ENCODE measurements at regions of chr2 and their contacts with region 1.

Region 1: DNA sequence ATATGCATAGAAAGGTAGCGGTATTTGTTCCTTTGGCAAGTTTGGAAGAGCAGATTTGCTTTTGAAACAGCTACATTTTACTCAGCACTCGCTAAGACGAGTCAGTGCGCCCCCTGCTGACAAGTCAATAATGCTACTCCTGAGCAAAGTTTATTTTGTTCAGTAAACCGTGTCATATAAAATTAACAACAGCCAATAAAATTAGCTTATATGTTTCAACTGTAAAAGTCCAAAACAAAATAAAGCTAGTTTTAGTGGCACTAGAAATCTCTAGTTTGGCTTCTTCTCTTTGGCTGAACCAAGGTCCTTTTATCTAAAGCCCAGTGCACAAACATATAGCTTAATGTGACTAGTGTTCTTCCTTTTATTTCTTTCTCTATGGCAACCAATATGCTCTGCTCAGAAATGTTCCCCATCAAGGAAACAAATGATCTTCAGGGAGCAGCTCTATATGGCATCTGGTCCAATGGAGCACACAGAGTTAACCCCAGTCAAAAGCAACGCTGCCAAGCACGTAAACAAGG is 4.2 kb upstream of the POU3F3 start:
- DNase-seq: peak; percentile 45
- CTCF ChIP-seq: peak; percentile 79

Region 2: DNA sequence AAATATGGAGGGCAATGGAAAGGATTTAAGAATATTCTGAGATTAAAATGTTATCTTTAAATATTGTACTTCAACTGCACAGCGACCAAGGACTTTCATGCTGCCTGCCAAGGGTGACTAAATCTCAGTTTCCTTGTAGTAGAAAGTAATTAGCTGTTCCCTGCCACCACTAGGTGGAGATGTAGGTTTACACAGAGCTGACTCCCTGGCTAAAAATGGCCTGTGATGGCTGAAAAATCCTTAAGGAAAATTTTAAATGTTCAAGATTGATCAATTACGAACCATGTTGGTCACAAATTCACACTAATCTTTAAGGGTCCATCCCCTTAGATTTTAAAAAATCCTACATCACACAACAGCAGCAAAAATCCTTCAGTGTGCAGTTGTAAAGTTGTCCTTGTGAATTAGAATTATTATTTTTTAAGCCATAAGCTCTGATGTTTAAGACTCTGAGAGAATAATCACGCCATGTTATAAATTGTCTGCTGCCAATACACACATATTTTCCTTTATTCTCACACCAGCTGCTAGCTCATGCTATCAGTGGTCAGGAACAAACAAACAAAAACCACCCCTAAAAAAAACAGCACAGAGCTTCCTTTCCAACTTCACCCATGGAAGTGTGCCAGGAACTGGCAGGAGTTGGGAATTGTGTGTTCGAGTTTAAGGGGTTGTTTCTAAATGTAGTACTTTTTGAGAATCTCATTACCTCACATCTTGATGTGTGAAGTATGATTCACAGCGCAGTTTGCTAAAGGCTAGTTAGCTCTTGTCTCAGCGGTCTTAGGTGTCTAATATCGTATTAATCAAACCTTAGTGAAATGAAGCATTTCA is 1688.0 kb before region 1 on chr2:
- CTCF ChIA-PET with region 1: interaction called, 31 read pairs
- POLR2A ChIA-PET with region 1: no interaction called
- DNase-seq: peak; percentile 40
- CTCF ChIP-seq: peak; percentile 76

Region 3: GRCh38 chr2:103959174-103960128 is 890.2 kb before region 1 on chr2:
- CTCF ChIA-PET with region 1: interaction called, 21 read pairs
- POLR2A ChIA-PET with region 1: no interaction called
- DNase-seq: peak; percentile 5
- CTCF ChIP-seq: peak; percentile 56

Region 4: GRCh38 chr2:104834431-104835153 is 15.1 kb before region 1 on chr2:
- CTCF ChIA-PET with region 1: interaction called, 26 read pairs
- POLR2A ChIA-PET with region 1: no interaction called
- DNase-seq: no peak
- CTCF ChIP-seq: no peak

Region 5: DNA sequence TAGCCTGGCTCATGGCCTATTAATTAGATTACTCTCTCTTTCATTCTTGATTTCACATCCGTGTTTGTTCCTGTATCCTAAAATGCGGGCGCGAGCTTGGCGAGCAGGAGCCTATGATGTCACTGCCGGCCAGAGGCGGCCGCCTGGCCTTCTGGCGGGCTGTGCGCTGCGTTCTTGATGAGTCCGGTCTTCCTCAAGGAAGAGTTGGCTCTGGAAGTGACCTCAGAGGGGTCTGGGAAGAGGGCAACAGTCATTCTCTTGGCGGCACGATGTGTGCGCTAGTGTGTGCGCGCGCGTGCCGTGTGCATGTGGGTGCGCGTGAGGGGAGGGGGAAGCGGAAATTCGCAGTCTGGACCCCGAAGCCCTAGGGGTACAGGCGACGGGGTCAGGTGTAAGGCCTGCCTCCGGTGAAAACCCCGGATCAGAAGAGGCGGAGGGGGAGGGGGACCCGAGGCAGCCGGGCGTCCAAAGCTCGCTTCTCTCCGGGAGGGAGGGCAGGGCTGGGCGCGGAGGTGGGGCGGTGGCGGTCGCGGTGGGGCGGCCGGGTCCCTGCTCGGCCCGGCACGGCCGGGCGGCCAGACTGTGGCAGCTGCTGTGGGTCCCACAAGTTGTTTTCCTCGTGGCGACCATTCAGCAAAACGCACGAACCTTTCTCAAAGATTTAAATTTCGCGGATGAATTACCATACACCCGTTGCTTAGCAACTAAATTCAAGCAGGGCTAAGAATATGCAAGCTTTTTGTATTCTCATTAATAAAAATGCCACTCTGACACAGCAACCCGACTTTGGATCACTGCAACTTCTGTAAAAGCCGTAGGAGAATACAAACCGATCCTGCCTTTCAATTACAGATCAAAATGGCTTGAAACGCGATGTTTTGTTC is 12.6 kb after region 1 on chr2:
- CTCF ChIA-PET with region 1: interaction called, 33 read pairs
- POLR2A ChIA-PET with region 1: no interaction called
- DNase-seq: no peak
- CTCF ChIP-seq: no peak

Region 6: DNA sequence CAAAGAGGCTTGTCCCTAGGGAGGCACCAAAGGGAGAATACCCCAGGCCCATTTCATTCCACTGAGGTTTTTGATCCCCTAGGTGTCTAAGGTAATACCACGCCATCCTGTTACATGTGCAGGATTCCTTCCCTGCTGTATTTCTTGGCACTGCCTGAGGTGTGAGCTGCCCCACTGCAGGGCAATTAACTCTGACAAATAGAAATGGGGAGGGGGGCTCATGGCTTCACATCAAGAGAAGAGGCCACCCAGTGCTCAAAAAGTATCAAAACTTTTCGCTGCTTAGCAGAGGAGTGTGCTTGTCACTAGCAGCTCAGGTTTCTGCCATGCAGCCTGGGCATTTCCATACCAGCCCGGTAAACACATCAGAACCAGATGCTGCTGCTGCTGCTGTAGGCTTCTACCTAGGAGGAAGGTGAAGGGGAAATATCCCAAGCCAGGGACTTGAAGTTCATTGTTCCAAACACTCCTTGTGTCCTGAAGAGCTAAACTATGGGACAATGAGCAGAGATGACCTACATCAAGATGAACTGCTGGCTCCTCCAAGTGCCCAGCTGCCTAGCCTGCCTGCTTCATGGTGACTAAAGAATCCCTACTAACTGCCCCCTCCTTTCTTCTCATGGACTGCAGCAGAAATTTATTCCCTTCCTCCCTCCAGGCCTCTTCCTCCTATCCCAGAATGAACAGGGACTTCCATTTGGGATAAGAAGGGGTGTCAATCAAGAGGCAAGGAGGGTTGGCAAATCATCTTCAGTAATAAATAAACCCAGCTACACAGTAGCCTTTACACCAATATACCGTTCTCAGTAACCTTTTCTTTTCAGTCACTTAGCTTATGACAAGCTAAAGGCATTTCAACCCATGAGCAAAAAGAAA is 20.7 kb after region 1 on chr2:
- CTCF ChIA-PET with region 1: interaction called, 30 read pairs
- POLR2A ChIA-PET with region 1: no interaction called
- DNase-seq: no peak
- CTCF ChIP-seq: no peak

Region 7: DNA sequence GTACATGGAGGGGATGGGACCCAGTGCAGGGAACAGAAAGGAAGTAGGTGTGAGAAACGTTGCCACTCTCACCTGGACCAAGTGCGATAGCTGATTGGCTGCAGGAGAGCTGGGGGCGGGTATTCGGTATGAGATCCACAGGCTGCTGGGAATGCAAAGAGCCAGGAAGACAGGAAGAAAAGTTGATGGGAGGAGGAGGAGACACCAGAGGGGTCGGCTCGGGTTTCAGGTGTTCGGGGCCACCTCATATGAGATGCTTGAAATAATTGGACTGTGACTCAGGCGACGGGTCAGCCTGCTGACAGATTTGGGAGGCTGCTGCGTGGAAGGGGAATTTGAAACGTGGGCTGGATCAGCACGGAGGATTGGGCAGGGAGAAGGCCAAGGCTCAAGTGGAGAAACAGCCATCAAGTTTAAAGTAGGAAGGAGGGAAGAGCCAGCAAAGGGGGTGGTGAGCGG is 253.3 kb after region 1 on chr2:
- CTCF ChIA-PET with region 1: no interaction called
- POLR2A ChIA-PET with region 1: no interaction called
- DNase-seq: no peak
- CTCF ChIP-seq: no peak